Ovary (tissue), 10 donors: ENCODE measurements at regions of chr16 and their contacts with region 1.

Region 1: GRCh38 chr16:48565752-48566151 is 44.2 kb downstream of the N4BP1 start:
- DNase-seq: no peak
- H3K4me3 ChIP-seq: no peak overlapping the region
- H3K27ac ChIP-seq: no peak overlapping the region
- H3K4me1 ChIP-seq: no peaks in the 10 kb centered on the region
- H3K27me3 ChIP-seq: no peaks in the 10 kb centered on the region
- CTCF ChIP-seq: no peak
- EP300 ChIP-seq: no peak
- POLR2A ChIP-seq: no peak

Region 2: DNA sequence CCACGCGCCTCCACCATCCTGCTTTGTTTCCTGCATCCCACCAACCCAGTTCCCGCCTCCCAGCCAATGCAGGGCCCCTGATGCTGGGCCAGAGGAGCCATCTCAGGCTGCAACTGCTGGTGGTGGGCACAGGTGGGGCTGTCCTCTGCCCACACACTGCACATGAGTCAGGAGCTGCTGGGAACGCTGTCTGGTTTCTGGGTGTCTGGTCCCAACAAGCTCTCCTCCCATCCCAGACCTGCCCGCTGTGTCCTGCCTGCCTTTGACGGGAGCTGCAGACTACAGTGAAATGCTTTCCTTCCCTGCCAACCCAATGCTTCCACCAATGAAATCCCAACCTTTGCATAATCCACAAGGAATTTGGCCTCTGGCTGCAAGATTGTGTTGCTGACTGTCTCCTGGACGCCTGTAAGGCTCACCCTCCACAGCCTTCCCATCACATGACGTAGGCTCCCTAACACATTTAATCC is 54.6 kb before region 1 on chr16:
- intact Hi-C with region 1: no loop called
- DNase-seq: peak in 1 of 5 donors; percentile 23
- H3K4me3 ChIP-seq: no peak overlapping the region
- H3K27ac ChIP-seq: no peak overlapping the region
- H3K4me1 ChIP-seq: no peaks in the 10 kb centered on the region
- H3K27me3 ChIP-seq: no peaks in the 10 kb centered on the region
- CTCF ChIP-seq: no peak
- EP300 ChIP-seq: no peak
- POLR2A ChIP-seq: no peak

Region 3: GRCh38 chr16:48592839-48593429 is 27.2 kb after region 1 on chr16:
- intact Hi-C with region 1: loop called in 1 of 4 experiments (anchors 2 kb)
- DNase-seq: no peak
- H3K4me3 ChIP-seq: no peak overlapping the region
- H3K27ac ChIP-seq: no peak overlapping the region
- H3K4me1 ChIP-seq: peaks cover 12% of the 10 kb centered on the region
- H3K27me3 ChIP-seq: no peaks in the 10 kb centered on the region
- CTCF ChIP-seq: no peak
- EP300 ChIP-seq: no peak
- POLR2A ChIP-seq: no peak

Region 4: GRCh38 chr16:48609652-48610029 is 43.9 kb after region 1 on chr16:
- intact Hi-C with region 1: no loop called
- DNase-seq: peak in 3 of 5 donors; percentile 66 to 85 (median 79)
- H3K4me3 ChIP-seq: peak overlapping the region; percentile 66
- H3K27ac ChIP-seq: peak overlapping the region; percentile 88 to 91
- H3K4me1 ChIP-seq: peaks cover 18% of the 10 kb centered on the region
- H3K27me3 ChIP-seq: no peaks in the 10 kb centered on the region
- CTCF ChIP-seq: no peak
- EP300 ChIP-seq: no peak
- POLR2A ChIP-seq: no peak

Region 5: DNA sequence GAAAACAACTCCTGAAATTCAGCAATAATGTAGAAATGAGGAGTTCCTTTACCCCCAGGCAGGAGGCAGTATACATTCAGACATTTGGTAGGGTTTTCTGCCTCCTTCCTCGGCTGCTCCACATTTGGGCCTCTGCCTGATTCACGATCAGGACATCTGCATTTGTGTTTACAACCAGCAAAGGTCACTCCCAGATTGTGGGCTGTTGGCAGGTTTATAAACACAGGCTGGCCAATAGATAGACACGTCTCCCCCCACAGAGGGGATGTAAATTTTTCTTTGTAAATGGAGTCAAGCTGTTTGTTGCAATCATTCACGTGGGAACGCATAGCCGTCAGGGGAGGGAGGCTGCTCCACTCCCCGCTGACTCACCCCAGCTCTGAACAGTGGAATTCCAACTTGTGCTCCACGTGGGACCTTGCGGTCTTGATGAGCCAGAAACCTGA is 296.4 kb after region 1 on chr16:
- intact Hi-C with region 1: no loop called
- DNase-seq: no peak
- H3K4me3 ChIP-seq: no peak overlapping the region
- H3K27ac ChIP-seq: no peak overlapping the region
- H3K4me1 ChIP-seq: no peaks in the 10 kb centered on the region
- H3K27me3 ChIP-seq: no peaks in the 10 kb centered on the region
- CTCF ChIP-seq: no peak
- EP300 ChIP-seq: no peak
- POLR2A ChIP-seq: no peak